ENCODE measurements at regions of chr10 and their contacts with region 1.

Region 1: GRCh38 chr10:19904193-19904661 is 88.0 kb downstream of the PLXDC2 start:
- DNase-seq: peak; percentile 95
- H3K4me3 ChIP-seq: no peak overlapping the region
- H3K27ac ChIP-seq: peak overlapping the region; percentile 71
- H3K27me3 ChIP-seq: no peaks in the 10 kb centered on the region
- CTCF ChIP-seq: no peak

Region 2: DNA sequence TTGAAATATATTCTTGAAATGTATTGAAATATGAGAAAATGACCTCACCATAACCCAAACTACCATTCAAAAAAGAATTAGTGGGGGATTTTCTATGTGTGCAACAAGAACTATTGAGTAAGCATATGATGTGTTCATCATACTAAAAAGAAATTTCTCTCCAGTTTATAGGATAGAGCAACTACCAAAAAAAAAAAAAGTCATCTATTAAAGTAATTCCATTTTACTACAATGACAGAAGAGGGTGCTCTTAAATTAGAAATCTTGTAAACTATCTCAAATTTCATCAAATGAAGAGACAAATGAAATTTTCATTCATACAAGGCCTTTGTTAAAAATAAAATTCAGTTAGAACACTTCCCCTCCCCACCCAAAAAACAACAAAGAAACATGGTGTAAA is 283.4 kb before region 1 on chr10:
- in situ Hi-C with region 1: no loop called
- DNase-seq: no peak
- H3K4me3 ChIP-seq: no peak overlapping the region
- H3K27ac ChIP-seq: no peak overlapping the region
- H3K27me3 ChIP-seq: no peaks in the 10 kb centered on the region
- CTCF ChIP-seq: no peak

Region 3: GRCh38 chr10:19819419-19820033 is 84.7 kb before region 1 on chr10:
- in situ Hi-C with region 1: loop called (anchors 25 kb)
- DNase-seq: peak; percentile 64
- H3K4me3 ChIP-seq: no peak overlapping the region
- H3K27ac ChIP-seq: no peak overlapping the region
- H3K27me3 ChIP-seq: peaks cover 27% of the 10 kb centered on the region
- CTCF ChIP-seq: peak; percentile 57